BJ (cell line): ENCODE measurements at regions of chr3 and their contacts with region 1.

Region 1: DNA sequence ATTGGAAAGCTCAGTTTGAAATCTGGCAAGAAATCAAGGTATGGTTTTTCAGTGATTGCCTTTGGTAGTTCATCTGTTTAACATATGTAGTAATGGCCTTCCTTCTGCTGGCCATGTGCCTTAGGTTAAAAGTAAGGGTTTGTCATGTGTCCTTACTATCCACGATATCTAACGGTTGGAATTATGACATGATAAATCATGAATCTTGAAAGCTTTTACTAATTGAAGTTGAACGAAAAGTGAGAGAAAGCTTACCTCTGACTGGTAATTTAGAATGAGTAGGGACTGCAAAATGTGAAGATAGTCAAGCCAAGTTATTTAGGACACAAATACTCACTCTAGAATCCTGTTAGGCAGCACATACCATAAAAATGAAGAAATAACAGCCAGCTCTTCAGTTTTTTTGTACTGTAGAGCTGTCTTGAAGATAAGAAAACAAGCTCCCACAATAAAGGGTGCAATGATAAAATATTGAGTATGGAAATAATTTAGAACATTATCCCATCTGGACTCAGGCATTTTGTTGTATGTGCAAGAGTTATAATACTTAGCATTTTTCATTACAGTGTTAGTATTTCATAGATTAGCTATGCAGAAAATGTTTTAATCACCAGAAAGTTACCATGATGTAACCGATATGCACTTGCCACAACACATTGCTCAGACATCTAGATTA is 303.4 kb downstream of the ZNF385D start:
- DNase-seq: peak; percentile 90
- H3K4me3 ChIP-seq: no peak overlapping the region
- H3K27me3 ChIP-seq: no peaks in the 10 kb centered on the region
- CTCF ChIP-seq: no peak

Region 2: GRCh38 chr3:20935791-20936190 is 511.8 kb before region 1 on chr3:
- CTCF ChIA-PET with region 1: no interaction called
- POLR2A ChIA-PET with region 1: interaction called, 13 read pairs
- DNase-seq: peak; percentile 46
- H3K4me3 ChIP-seq: no peak overlapping the region
- H3K27me3 ChIP-seq: no peaks in the 10 kb centered on the region
- CTCF ChIP-seq: no peak